Dorsolateral prefrontal cortex (tissue), 120 donors: ENCODE measurements at regions of chr1 and their contacts with region 1.

Region 1: DNA sequence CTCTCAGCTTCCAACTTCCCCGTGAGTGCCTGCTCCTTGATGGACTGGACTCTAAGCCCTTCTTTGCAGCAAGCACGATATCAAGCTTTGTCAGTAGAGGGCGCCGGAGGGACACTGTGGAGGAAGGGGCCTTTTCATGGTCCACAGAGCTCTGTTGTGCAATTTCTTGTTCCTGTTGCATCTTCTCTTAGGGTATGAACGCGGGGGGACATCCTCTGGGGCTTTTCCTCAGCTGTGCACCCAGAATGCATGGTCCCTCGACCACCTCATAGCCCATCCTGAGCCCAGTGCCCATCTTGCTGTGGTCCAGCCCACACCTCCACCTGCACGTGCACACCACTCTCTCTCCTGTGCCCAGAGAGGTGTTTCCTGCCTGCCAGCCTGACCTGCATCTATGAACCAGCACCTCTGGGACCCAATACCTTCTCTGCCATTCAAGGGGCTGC is 556.8 kb downstream of the PTPRU start:
- DNase-seq: peak in 9 of 10 donors; percentile 51 to 88 (median 76)
- H3K4me3 ChIP-seq: no peak overlapping the region
- H3K27ac ChIP-seq: no peak overlapping the region
- H3K27me3 ChIP-seq: no peaks in the 10 kb centered on the region
- CTCF ChIP-seq: peak; percentile 27 to 83 (median 72)

Region 2: GRCh38 chr1:29752141-29752540 is 41.0 kb before region 1 on chr1:
- intact Hi-C with region 1: no loop called
- DNase-seq: peak in 1 of 10 donors; percentile 1
- H3K4me3 ChIP-seq: no peak overlapping the region
- H3K27ac ChIP-seq: no peak overlapping the region
- H3K27me3 ChIP-seq: peaks cover 0 to 2% (median 0%) of the 10 kb centered on the region in 45 donors
- CTCF ChIP-seq: no peak

Region 3: GRCh38 chr1:30379684-30380624 is 586.8 kb after region 1 on chr1:
- intact Hi-C with region 1: loop called in 1 of 2 experiments (anchors 10 kb)
- DNase-seq: peak in 6 of 10 donors; percentile 27 to 67 (median 54)
- H3K4me3 ChIP-seq: no peak overlapping the region
- H3K27ac ChIP-seq: peak overlapping the region in 11 of 59 donors; percentile 0 to 58 (median 26)
- H3K27me3 ChIP-seq: peaks cover 0 to 51% (median 2%) of the 10 kb centered on the region in 45 donors
- CTCF ChIP-seq: peak; percentile 69 to 95 (median 82)